Activated B cell treated with CpG ODN at 0.5 μM for 24 hours (primary cell): ENCODE measurements at regions of chr3 and their contacts with region 1.

Region 1: GRCh38 chr3:188421836-188422540 is 268.0 kb downstream of the LPP start:
- DNase-seq: no peak
- ATAC-seq: peak; percentile 95
- H3K4me3 Mint-ChIP-seq: peak overlapping the region; percentile 69
- H3K27ac Mint-ChIP-seq: peak overlapping the region; percentile 98
- H3K4me1 Mint-ChIP-seq: peaks cover 90% of the 10 kb centered on the region
- H3K27me3 Mint-ChIP-seq: no peaks in the 10 kb centered on the region
- CTCF ChIP-seq: no peak

Region 2: GRCh38 chr3:188320757-188321156 is 101.2 kb before region 1 on chr3:
- CTCF ChIA-PET with region 1: no interaction called
- POLR2A ChIA-PET with region 1: no interaction called
- intact Hi-C with region 1: no loop called
- DNase-seq: no peak
- ATAC-seq: no peak
- H3K4me3 Mint-ChIP-seq: peak overlapping the region; percentile 3
- H3K27ac Mint-ChIP-seq: peak overlapping the region; percentile 19
- H3K4me1 Mint-ChIP-seq: peaks cover 49% of the 10 kb centered on the region
- H3K27me3 Mint-ChIP-seq: no peaks in the 10 kb centered on the region
- CTCF ChIP-seq: no peak

Region 3: DNA sequence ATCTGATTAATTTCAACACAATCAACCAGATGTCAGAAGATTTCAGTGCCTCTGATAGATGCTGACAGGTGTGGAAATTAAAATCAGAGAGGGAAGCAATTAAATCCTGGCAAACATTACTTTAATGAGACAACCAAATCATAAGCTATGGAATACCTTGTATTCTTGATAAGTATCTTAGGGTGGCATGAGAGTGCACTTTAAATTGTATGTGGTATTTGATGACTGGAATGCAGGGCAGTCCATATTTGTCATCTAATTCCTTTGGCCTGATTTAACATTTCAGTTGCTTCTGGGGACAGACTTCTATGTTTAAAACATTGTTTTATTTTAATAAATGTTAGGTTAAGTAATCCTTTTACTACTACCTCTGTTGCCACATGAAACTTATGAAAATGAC is 83.9 kb before region 1 on chr3:
- CTCF ChIA-PET with region 1: no interaction called
- POLR2A ChIA-PET with region 1: no interaction called
- intact Hi-C with region 1: no loop called
- DNase-seq: no peak
- ATAC-seq: no peak
- H3K4me3 Mint-ChIP-seq: no peak overlapping the region
- H3K27ac Mint-ChIP-seq: no peak overlapping the region
- H3K4me1 Mint-ChIP-seq: peaks cover 43% of the 10 kb centered on the region
- H3K27me3 Mint-ChIP-seq: no peaks in the 10 kb centered on the region
- CTCF ChIP-seq: no peak

Region 4: DNA sequence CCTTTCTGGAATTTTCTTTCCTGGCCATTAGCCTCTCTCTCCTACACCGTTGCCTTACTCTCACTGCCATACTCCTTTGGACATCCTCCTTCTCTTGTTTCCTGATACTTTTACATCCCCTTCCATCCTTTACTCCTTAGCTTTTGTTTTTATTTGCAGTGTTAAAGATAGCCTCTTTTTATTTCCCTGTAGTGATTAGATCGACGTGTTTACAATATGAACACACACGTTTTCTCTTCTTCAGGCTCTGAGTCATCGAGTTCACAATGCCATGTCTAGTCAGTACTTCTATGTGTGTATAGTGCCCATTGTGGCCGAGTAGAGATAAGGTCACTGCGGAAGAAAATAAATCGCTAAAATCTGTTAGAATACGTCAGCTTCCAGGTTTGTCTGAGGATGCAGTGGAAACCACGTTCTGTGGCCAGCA is 59.6 kb before region 1 on chr3:
- CTCF ChIA-PET with region 1: no interaction called
- POLR2A ChIA-PET with region 1: interaction called, 11 read pairs
- intact Hi-C with region 1: no loop called
- DNase-seq: no peak
- ATAC-seq: peak; percentile 63
- H3K4me3 Mint-ChIP-seq: peak overlapping the region; percentile 24
- H3K27ac Mint-ChIP-seq: peak overlapping the region; percentile 80
- H3K4me1 Mint-ChIP-seq: peaks cover 78% of the 10 kb centered on the region
- H3K27me3 Mint-ChIP-seq: no peaks in the 10 kb centered on the region
- CTCF ChIP-seq: no peak

Region 5: GRCh38 chr3:188400494-188401243 is 21.3 kb before region 1 on chr3:
- CTCF ChIA-PET with region 1: interaction called, 7 read pairs
- POLR2A ChIA-PET with region 1: interaction called, 79 read pairs
- intact Hi-C with region 1: loop called (anchors 1 kb)
- DNase-seq: no peak
- ATAC-seq: peak; percentile 82
- H3K4me3 Mint-ChIP-seq: peak overlapping the region; percentile 56
- H3K27ac Mint-ChIP-seq: peak overlapping the region; percentile 91
- H3K4me1 Mint-ChIP-seq: peaks cover 93% of the 10 kb centered on the region
- H3K27me3 Mint-ChIP-seq: no peaks in the 10 kb centered on the region
- CTCF ChIP-seq: no peak

Region 6: GRCh38 chr3:188432802-188433520 is 11.0 kb after region 1 on chr3:
- CTCF ChIA-PET with region 1: interaction called, 8 read pairs
- POLR2A ChIA-PET with region 1: interaction called, 50 read pairs
- intact Hi-C with region 1: loop called (anchors 1 kb)
- DNase-seq: no peak
- ATAC-seq: peak; percentile 90
- H3K4me3 Mint-ChIP-seq: peak overlapping the region; percentile 80
- H3K27ac Mint-ChIP-seq: peak overlapping the region; percentile 100
- H3K4me1 Mint-ChIP-seq: peaks cover 91% of the 10 kb centered on the region
- H3K27me3 Mint-ChIP-seq: no peaks in the 10 kb centered on the region
- CTCF ChIP-seq: no peak

Region 7: GRCh38 chr3:188697127-188697526 is 275.1 kb after region 1 on chr3:
- CTCF ChIA-PET with region 1: interaction called, 3 read pairs
- POLR2A ChIA-PET with region 1: no interaction called
- intact Hi-C with region 1: loop called (anchors 5 kb)
- DNase-seq: no peak
- ATAC-seq: peak; percentile 80
- H3K4me3 Mint-ChIP-seq: peak overlapping the region; percentile 20
- H3K27ac Mint-ChIP-seq: peak overlapping the region; percentile 86
- H3K4me1 Mint-ChIP-seq: peaks cover 72% of the 10 kb centered on the region
- H3K27me3 Mint-ChIP-seq: no peaks in the 10 kb centered on the region
- CTCF ChIP-seq: no peak